Heart left ventricle (tissue), 16 donors: ENCODE measurements at regions of chr13 and their contacts with region 1.

Region 1: DNA sequence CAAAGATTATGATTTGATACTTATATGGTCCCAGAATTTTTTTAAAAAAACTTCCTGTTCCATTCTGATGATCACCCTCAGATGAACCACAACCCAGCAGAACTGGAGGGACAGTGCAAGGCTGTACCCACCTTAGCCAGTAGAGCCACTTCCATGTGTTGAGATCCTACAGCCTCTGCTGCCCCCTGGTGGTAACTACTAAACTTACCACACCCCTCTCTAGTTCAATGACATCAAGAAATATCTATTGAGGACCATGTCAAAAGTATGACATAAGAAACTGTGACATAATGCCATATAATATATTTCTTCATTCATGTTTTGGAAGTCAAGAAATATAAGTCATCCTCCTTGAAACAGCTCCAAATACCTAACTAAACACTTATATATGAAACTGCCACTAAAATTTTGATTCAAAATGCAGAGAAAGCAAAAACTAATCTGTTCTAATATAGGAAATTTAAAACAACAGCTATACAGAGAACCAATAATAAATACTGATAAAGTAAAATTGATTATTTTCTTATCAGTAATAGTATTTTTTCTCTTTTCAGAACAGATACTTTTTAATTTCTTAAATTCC is 412.6 kb downstream of the KCTD12 start:
- DNase-seq: peak; percentile 61 to 76 (median 65)
- ATAC-seq: peak; percentile 93 to 98 (median 96)
- H3K4me3 ChIP-seq: no peak overlapping the region
- H3K27ac ChIP-seq: peak overlapping the region in 1 of 12 donors; percentile 40
- H3K4me1 ChIP-seq: peaks cover 0 to 11% (median 2%) of the 10 kb centered on the region in 12 donors
- H3K27me3 ChIP-seq: no peaks in the 10 kb centered on the region
- CTCF ChIP-seq: peak; percentile 77 to 92 (median 87)
- POLR2A ChIP-seq: no peak

Region 2: DNA sequence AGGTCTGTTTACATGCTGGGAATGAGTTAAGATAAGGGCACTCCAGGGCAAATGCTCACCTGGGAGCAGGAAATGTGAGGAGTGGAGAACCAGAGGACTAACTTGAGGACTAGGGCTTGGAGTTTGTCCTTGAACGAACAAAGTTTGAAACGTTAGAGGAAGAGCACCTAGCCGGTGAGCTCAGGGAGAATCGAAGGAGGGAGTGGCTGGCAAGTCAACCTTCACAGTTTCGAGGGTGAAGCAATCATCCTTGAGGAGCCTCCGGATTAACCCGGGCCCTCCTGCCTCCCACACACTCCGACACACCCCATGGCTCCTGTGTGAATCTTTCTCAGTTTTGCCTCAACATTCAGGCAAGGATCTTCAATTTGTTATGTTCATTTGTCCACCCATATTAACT is 778.9 kb before region 1 on chr13:
- intact Hi-C with region 1: loop called (anchors 5 to 10 kb)
- DNase-seq: no peak
- ATAC-seq: no peak
- H3K4me3 ChIP-seq: no peak overlapping the region
- H3K27ac ChIP-seq: no peak overlapping the region
- H3K4me1 ChIP-seq: peaks cover 0 to 3% (median 0%) of the 10 kb centered on the region in 12 donors
- H3K27me3 ChIP-seq: no peaks in the 10 kb centered on the region
- CTCF ChIP-seq: no peak
- POLR2A ChIP-seq: no peak

Region 3: GRCh38 chr13:75788481-75788981 is 685.1 kb before region 1 on chr13:
- intact Hi-C with region 1: no loop called
- DNase-seq: peak in 4 of 5 donors; percentile 34 to 52 (median 52)
- ATAC-seq: peak; percentile 61 to 81 (median 73)
- H3K4me3 ChIP-seq: no peak overlapping the region
- H3K27ac ChIP-seq: peak overlapping the region in 11 of 12 donors; percentile 53 to 87 (median 66)
- H3K4me1 ChIP-seq: peaks cover 0 to 89% (median 44%) of the 10 kb centered on the region in 12 donors
- H3K27me3 ChIP-seq: no peaks in the 10 kb centered on the region
- CTCF ChIP-seq: no peak
- POLR2A ChIP-seq: no peak

Region 4: DNA sequence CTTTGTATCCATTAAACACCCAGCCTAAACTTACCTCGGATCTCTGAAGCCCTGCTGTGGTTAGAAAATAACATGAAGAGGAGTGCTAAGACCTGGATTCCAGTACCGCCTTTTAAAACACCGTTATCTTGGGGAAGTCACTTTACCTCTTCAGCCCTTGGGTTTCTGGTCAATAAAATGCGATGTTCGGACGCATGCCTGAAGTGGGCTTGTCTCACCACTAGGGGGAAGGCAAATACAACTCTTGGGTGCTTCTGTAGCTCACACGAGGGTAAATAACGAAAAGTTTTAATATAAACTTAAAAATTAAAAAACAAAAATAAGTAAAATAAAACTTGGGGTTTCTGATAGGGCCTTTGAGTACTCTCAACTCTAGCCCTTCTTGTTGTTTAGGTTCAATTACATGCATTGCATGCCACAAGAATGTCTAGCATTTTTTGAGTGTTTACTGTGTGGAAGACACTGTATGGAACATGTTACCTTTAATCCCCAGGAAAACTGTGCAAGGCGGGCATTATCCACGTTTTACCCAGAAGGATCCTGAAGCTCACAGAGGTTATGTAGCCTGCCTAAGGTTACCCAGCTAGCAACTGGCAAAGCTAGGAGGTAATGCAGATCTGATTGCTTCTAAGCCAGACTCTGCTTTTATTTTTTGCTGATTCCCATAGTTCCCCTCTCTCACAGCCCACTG is 597.1 kb before region 1 on chr13:
- intact Hi-C with region 1: loop called (anchors 1 to 5 kb)
- DNase-seq: peak in 4 of 5 donors; percentile 39 to 49 (median 44)
- ATAC-seq: peak; percentile 83 to 92 (median 86)
- H3K4me3 ChIP-seq: no peak overlapping the region
- H3K27ac ChIP-seq: no peak overlapping the region
- H3K4me1 ChIP-seq: peaks cover 0 to 8% (median 0%) of the 10 kb centered on the region in 12 donors
- H3K27me3 ChIP-seq: no peaks in the 10 kb centered on the region
- CTCF ChIP-seq: peak; percentile 86 to 96 (median 92)
- POLR2A ChIP-seq: no peak

Region 5: GRCh38 chr13:76038920-76039716 is 434.5 kb before region 1 on chr13:
- intact Hi-C with region 1: loop called in 3 of 10 experiments (anchors 10 kb)
- DNase-seq: no peak
- ATAC-seq: no peak
- H3K4me3 ChIP-seq: no peak overlapping the region
- H3K27ac ChIP-seq: no peak overlapping the region
- H3K4me1 ChIP-seq: no peaks in the 10 kb centered on the region
- H3K27me3 ChIP-seq: no peaks in the 10 kb centered on the region
- CTCF ChIP-seq: peak in 2 of 12 donors; percentile 10 to 13
- POLR2A ChIP-seq: no peak

Region 6: GRCh38 chr13:76886292-76887075 is 412.8 kb after region 1 on chr13 and contains the start of gene KCTD12:
- intact Hi-C with region 1: loop called in 1 of 10 experiments (anchors 5 kb)
- DNase-seq: peak; percentile 91 to 96 (median 93)
- ATAC-seq: peak; percentile 64 to 91 (median 86)
- H3K4me3 ChIP-seq: peak within 1 kb of the TSS; percentile 62 to 96 (median 76)
- H3K27ac ChIP-seq: peak within 1 kb of the TSS; percentile 81 to 97 (median 92)
- H3K4me1 ChIP-seq: peaks cover 0 to 33% (median 12%) of the 10 kb centered on the region in 12 donors
- H3K27me3 ChIP-seq: no peaks in the 10 kb centered on the region
- CTCF ChIP-seq: peak in 10 of 12 donors; percentile 22 to 61 (median 47)
- POLR2A ChIP-seq: peak in 1 of 2 donors; percentile 89
- total RNA-seq, gene KCTD12: 29.5 to 84.4 (median 44.1) TPM

Region 7: GRCh38 chr13:76980075-76980718 is 506.6 kb after region 1 on chr13:
- intact Hi-C with region 1: loop called in 1 of 10 experiments (anchors 10 kb)
- DNase-seq: peak; percentile 72 to 92 (median 79)
- ATAC-seq: peak; percentile 91 to 98 (median 94)
- H3K4me3 ChIP-seq: peak overlapping the region in 10 of 12 donors; percentile 20 to 50 (median 33)
- H3K27ac ChIP-seq: no peak overlapping the region
- H3K4me1 ChIP-seq: peaks cover 0 to 11% (median 2%) of the 10 kb centered on the region in 12 donors
- H3K27me3 ChIP-seq: peaks cover 0 to 38% (median 6%) of the 10 kb centered on the region in 9 donors
- CTCF ChIP-seq: peak; percentile 93 to 100 (median 96)
- POLR2A ChIP-seq: no peak